ENCODE measurements at regions of chr6 and their contacts with region 1.

Region 1: GRCh38 chr6:37051138-37052026 is 45.9 kb downstream of the FGD2 start:
- DNase-seq: peak; percentile 94
- H3K4me3 Mint-ChIP-seq: peak overlapping the region; percentile 88
- H3K27ac Mint-ChIP-seq: peak overlapping the region; percentile 99
- H3K4me1 Mint-ChIP-seq: peaks cover 71% of the 10 kb centered on the region
- H3K27me3 Mint-ChIP-seq: no peaks in the 10 kb centered on the region

Region 2: GRCh38 chr6:36827261-36828079 is 223.9 kb before region 1 on chr6:
- CTCF ChIA-PET with region 1: no interaction called
- POLR2A ChIA-PET with region 1: no interaction called
- DNase-seq: peak; percentile 45
- H3K4me3 Mint-ChIP-seq: no peak overlapping the region
- H3K27ac Mint-ChIP-seq: no peak overlapping the region
- H3K4me1 Mint-ChIP-seq: peaks cover 10% of the 10 kb centered on the region
- H3K27me3 Mint-ChIP-seq: peaks cover 8% of the 10 kb centered on the region

Region 3: DNA sequence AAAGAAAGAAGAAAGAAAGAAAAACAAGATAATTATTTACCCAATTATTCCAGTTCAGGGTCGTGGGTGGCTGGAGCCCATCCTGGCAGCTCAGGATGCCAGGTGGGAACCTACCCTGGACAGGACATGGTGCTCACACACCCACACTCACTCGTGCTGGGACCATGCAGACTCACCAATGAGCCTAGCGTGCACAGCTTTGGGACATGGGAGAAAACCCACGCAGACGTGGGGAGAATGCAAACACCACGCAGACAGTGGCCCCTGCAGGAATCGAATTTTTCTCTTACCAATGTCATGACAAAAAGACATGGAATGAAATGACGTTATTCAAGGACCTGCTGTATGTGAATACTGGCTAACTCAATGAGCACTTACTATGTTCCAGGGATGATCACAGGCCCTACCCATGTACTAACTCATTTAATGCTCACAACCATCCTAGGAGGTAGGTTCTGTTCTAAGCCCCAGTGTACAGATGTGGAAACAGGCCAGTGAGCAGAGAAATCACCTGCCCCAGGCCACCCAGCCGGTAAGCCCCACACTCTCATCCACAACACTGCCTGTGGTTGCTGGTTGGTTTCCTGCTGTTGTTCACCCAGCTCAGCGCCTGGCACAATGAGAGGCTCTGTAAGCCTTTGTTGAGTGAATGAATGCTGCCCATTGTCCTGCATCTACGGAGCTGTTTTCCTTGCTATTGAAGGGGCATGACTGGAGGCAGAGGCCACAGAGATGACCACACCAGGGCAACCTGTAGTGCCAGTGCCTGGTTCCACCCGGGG is 103.6 kb before region 1 on chr6:
- CTCF ChIA-PET with region 1: no interaction called
- POLR2A ChIA-PET with region 1: no interaction called
- DNase-seq: peak; percentile 71
- H3K4me3 Mint-ChIP-seq: peak overlapping the region; percentile 30
- H3K27ac Mint-ChIP-seq: no peak overlapping the region
- H3K4me1 Mint-ChIP-seq: peaks cover 38% of the 10 kb centered on the region
- H3K27me3 Mint-ChIP-seq: peaks cover 21% of the 10 kb centered on the region

Region 4: DNA sequence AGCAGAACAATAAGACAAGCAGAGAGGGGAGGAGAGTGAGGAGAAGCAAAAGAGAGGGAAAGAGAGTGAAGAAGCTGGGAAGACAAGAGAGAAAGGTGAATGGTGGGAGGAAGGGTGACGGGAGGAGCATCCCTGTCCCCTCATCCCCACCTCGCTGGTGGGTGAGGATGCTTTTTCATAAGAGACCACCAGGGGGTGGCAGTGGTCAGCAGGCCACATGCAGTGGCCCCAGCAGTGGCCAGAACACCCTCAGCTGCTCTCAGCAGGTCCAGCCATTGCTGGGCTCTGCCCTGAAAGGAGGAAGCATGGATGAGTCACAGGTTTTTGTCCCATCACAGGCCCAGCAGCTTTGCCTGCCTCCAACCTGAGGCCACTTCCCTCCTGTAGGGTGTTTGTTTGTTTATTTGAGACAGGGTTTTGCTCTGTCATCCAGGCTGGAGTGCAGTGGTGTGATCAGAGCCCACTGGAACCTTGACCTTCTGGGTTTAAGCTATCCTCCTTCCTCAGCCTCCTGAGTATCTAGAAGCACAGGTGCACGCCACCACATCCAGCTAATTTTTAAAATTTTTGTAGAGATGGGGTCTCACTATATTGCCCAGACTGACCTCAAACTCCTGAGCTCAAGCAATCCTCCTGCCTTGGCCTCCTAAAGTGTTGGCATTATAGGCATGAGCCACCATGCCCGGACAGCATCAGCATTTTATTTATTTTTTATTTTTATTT is 22.0 kb before region 1 on chr6:
- CTCF ChIA-PET with region 1: interaction called, 399 read pairs
- POLR2A ChIA-PET with region 1: interaction called, 218 read pairs
- DNase-seq: peak; percentile 63
- H3K4me3 Mint-ChIP-seq: no peak overlapping the region
- H3K27ac Mint-ChIP-seq: peak overlapping the region; percentile 86
- H3K4me1 Mint-ChIP-seq: peaks cover 75% of the 10 kb centered on the region
- H3K27me3 Mint-ChIP-seq: no peaks in the 10 kb centered on the region

Region 5: DNA sequence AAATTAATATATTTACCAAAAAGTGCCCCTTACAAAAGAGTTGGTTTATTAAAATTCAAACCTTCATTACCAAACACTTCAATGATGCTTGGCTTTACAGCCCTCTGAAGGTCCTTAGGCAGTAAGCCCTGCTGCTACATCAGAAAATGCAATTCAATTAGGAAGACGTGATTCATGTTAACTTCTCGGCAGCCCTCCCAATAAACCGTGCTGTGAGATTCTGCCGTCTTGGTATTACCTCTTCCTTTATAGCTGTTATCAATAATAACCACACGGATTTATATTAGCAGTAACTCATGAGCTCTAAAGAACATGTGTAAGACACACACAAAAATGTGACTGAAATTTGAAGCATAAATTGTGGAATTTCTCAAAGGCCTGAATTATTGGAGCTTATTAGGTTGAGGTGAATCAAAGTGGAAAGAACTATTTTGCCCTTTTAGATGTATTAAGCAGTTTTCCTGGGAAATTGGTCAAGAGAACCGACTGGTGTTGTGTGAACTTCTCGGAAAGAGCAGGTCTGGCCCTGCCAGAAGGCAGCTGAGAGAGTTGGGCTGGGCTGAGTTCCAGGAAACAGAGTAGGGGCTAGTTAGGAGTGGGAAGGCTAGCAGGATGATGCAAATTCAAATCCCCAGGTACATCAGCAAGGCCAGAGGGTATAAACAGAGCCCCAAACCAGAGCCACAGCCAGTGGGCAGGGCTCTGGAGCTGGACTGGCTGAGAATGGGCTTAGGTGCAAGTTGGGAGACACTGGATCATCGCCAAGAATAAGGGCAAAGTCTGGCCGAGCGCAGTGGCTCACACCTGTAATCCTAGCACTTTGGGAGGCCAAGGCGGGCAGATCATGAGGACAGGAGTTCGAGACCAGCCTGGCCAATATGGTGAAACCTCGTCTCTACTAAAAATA is 12.8 kb before region 1 on chr6:
- CTCF ChIA-PET with region 1: interaction called, 399 read pairs
- POLR2A ChIA-PET with region 1: interaction called, 45 read pairs
- DNase-seq: no peak
- H3K4me3 Mint-ChIP-seq: no peak overlapping the region
- H3K27ac Mint-ChIP-seq: peak overlapping the region; percentile 33
- H3K4me1 Mint-ChIP-seq: peaks cover 54% of the 10 kb centered on the region
- H3K27me3 Mint-ChIP-seq: no peaks in the 10 kb centered on the region

Region 6: GRCh38 chr6:37102279-37103168 is 51.1 kb after region 1 on chr6:
- CTCF ChIA-PET with region 1: interaction called, 3 read pairs
- POLR2A ChIA-PET with region 1: interaction called, 26 read pairs
- DNase-seq: peak; percentile 71
- H3K4me3 Mint-ChIP-seq: peak overlapping the region; percentile 58
- H3K27ac Mint-ChIP-seq: peak overlapping the region; percentile 59
- H3K4me1 Mint-ChIP-seq: peaks cover 54% of the 10 kb centered on the region
- H3K27me3 Mint-ChIP-seq: no peaks in the 10 kb centered on the region

Region 7: DNA sequence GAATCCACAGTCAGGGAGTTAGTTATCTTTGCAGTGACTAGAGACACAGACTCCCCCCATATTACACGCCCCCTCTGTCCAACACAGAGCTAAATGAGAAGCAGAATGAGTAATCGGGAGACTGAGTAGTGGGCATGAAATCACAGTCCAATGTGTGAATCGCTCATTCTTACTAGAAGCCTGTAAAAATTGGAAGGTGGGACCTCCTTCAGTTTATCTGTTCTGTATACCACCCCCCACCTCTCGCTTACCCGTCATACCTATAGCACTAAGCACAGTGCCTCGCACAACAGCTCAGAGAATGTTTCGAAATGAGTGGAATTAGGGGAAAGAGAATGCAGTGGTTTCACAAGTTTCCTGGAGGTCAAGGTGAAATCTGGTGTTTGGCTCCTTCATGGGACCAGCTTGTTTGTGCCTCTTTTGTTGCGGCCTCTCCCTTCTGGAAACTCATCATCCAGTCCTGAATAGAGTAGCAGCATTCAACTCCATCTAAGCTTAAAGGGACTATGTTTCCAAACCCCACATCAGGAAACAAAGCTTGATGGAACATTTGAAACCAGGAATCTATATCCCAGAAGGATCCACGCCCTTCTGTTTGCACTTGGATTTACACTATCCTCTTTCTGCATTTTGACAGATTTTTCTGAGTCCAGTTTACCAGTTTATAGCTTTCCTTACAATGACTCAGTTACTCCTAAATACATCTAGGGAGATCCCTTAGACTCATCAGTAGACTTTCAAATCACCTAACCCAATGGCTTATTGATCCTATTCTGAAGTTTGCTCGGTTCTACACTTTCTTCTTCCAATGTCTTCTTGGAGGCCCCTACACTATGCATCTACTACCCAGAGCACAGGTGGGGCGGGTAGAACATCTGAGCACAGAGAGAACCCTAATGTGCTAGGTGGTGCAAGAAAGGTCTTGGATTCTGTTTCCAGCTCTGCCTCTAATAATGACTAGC is 59.4 kb after region 1 on chr6:
- CTCF ChIA-PET with region 1: interaction called, 6 read pairs
- POLR2A ChIA-PET with region 1: interaction called, 12 read pairs
- DNase-seq: peak; percentile 34
- H3K4me3 Mint-ChIP-seq: no peak overlapping the region
- H3K27ac Mint-ChIP-seq: peak overlapping the region; percentile 48
- H3K4me1 Mint-ChIP-seq: peaks cover 41% of the 10 kb centered on the region
- H3K27me3 Mint-ChIP-seq: peaks cover 3% of the 10 kb centered on the region

Region 8: GRCh38 chr6:37137201-37138090 is 86.1 kb after region 1 on chr6:
- CTCF ChIA-PET with region 1: interaction called, 17 read pairs
- POLR2A ChIA-PET with region 1: interaction called, 27 read pairs
- DNase-seq: peak; percentile 37
- H3K4me3 Mint-ChIP-seq: peak overlapping the region; percentile 51
- H3K27ac Mint-ChIP-seq: peak overlapping the region; percentile 72
- H3K4me1 Mint-ChIP-seq: peaks cover 61% of the 10 kb centered on the region
- H3K27me3 Mint-ChIP-seq: no peaks in the 10 kb centered on the region

Region 9: DNA sequence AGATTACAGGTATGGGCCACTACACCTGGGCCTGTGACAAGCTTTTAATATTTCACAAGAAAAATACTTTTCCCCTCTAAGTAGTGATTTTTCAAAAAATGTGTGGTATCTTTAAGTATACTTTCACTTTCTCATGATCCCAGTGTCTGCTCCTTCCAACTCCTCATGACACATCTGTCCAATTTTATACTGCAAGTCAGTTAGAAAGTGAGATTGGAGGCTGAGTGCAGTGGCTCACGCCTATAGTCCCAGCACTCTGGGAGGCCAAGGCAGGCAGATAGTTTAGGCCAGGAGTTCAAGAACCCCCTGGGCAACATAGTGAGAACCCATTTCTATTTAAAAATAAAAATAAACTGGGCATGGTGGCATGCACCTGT is 138.8 kb after region 1 on chr6:
- CTCF ChIA-PET with region 1: interaction called, 12 read pairs
- POLR2A ChIA-PET with region 1: interaction called, 1,021 read pairs
- DNase-seq: no peak
- H3K4me3 Mint-ChIP-seq: no peak overlapping the region
- H3K27ac Mint-ChIP-seq: peak overlapping the region; percentile 67
- H3K4me1 Mint-ChIP-seq: peaks cover 71% of the 10 kb centered on the region
- H3K27me3 Mint-ChIP-seq: no peaks in the 10 kb centered on the region